Endothelial cell of umbilical vein (primary cell): ENCODE measurements at regions of chr1 and their contacts with region 1.

Region 1: DNA sequence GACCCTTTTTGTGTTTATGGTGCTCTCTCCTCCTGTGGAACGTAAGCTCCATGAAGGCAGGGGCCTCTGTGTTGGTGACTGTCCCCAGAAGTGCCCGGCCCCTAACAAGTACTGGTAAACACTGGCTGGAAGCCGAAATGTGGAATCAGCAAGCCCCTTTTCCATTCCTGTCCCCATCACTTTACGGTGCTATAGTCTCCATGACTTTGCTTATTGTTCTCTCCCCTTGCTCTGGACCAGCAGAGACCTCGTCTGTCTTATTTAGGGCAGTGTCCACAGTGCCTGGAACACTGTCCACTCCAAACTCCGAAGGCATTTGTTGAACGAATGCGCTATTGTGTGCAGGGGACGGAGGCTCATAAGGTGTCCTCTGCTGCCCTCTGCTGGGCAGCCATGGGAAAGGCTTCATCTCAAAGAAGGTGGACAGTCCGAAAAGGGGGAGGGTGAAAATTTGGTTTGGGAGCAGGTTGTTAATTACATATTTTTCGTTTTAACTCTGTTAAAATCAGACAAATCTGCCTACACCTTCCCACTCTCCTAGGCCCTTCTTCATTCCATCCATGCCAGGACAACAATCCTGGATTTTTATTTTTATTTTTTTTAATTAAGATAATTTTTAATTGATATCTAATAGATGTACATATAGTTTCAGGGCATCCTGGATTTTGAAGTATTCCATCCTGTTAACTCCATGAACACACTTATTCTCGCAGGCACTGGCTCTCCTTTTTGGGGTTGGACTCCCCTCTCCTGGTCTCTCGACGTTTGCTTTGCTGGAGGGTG is 115.6 kb downstream of the PGBD5 start:
- DNase-seq: peak; percentile 68
- H3K4me3 ChIP-seq: no peak overlapping the region
- H3K27ac ChIP-seq: no peak overlapping the region
- H3K4me1 ChIP-seq: peaks cover 8% of the 10 kb centered on the region
- H3K27me3 ChIP-seq: no peaks in the 10 kb centered on the region
- CTCF ChIP-seq: peak; percentile 80 to 87
- POLR2A ChIP-seq: no peak

Region 2: DNA sequence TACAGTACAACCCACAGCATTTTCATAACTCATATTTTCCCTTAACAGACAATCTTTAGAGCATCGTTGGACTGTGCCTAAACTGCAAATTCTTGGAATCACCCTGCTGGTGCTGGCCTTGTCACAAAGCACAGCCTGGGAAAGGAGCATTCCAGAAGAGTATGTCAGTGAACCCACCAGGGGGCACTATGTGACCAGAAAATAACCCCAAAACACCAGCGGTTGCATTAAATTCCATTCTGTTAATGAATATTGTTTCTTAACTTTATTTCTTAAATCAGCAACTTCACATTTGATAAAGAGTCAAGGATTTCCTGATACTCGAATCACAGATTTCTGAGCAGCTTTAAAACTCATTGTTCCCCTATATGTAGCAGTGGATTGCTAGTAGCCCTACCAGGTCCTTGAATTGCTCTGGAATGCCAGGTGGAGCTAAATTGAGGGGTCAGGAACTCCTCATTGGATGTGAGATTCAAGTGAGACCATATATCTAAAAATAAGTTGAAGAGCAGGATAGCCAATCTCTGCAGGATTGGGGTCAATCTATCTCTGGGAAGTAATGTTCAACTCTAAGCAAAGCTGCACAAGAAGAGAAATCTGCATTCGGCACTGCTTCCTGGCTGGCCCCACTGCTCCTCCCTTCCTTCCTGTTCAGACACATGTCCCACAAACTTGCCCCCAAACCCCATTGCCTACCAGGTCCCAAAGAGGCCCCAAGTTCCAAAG is 1052.4 kb before region 1 on chr1:
- CTCF ChIA-PET with region 1: interaction called, 3 read pairs
- POLR2A ChIA-PET with region 1: no interaction called
- dilution Hi-C with region 1: no loop called
- intact Hi-C with region 1: loop called (anchors 1 kb)
- DNase-seq: peak; percentile 71
- H3K4me3 ChIP-seq: no peak overlapping the region
- H3K27ac ChIP-seq: no peak overlapping the region
- H3K4me1 ChIP-seq: peaks cover 5% of the 10 kb centered on the region
- H3K27me3 ChIP-seq: no peaks in the 10 kb centered on the region
- CTCF ChIP-seq: peak; percentile 68 to 80
- POLR2A ChIP-seq: no peak

Region 3: DNA sequence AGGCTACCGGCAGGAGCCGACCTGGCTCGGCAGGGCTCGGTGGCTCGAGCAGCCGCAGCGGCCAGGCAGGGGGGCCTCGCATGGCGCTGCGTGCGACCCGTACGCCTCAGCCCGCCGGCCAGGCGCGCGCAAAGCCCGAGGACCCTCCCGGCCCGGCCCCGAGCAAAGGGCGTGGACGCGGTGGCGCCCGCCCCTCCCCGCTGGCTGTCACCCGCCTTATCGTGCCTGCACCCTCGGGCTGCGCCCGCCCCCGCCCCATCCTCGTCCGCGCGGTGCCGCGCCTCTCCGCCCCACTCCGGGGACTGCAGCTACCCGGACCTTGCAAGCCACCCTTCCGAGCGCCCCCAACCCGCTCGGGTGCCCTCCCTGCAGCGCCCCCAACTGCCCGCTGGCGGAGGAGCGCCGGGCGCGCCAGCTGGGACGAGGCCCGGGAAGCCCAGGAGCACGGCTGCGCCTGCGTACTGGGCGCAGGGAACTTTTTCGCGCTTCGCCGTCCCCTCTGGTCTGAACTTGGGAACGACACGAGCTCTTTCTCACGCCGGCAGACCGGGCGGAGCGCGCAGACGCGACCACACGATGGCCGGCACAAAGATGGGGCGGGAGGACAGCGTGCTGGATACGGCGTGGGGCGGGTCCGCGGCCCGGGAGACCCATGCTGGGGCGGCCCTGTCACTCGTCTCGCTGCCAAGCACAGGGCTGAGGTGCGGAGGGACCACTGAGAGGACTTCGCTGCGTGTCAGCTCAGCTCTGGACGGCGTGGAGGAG is 751.8 kb before region 1 on chr1 and contains the start of gene ABCB10:
- CTCF ChIA-PET with region 1: interaction called, 5 read pairs
- POLR2A ChIA-PET with region 1: interaction called, 3 read pairs
- dilution Hi-C with region 1: no loop called
- intact Hi-C with region 1: loop called (anchors 1 kb)
- DNase-seq: peak; percentile 99
- H3K4me3 ChIP-seq: peak within 1 kb of the TSS; percentile 83 to 84 (median 84)
- H3K27ac ChIP-seq: peak within 1 kb of the TSS; percentile 6
- H3K4me1 ChIP-seq: peaks cover 15% of the 10 kb centered on the region
- H3K27me3 ChIP-seq: no peaks in the 10 kb centered on the region
- CTCF ChIP-seq: peak; percentile 86 to 97
- POLR2A ChIP-seq: no peak
- total RNA-seq, gene ABCB10: 19.4 and 19.8 TPM in 2 replicates

Region 4: DNA sequence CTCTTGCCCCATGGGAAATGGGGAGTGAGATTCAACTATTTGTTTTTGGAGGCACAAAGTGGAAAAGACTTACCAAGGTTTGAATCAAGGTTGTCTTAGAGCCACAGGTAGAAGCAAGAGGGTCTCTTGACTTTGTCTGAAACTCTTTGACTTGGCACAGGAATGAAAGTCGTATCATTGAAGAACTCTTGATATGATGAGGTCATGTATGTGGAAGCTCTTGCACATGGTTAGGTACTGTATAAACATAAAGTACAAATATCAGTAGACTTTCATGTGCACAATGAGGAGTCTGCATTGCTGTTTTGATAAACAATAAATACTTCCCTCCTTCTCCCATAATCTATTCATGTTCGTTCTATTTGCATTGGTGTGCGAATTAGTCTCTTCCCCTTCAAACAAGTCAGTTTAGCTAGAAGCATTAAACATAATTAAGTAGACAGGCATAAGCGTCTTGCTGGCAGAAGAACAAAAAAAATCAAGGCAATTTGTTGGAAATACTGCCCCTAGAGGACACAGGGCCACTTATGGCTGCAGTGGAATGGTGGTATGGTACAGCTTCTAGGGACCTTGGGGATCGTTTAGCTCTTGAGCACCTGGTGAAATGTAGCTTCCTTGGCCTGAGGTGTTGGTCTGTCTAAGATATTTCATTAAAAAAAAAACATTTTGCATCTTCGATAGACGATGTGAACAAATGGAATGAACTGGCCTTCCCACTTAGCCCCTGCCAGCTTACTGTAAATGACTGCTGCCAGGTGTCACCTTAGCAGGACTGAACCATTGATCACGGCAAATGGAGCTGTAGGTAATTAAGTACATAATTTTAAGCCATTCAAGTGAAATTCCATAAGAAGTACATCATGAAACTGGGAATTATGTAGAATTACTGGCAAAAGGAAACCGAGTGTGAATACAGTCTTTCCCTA is 461.6 kb before region 1 on chr1:
- CTCF ChIA-PET with region 1: no interaction called
- POLR2A ChIA-PET with region 1: no interaction called
- dilution Hi-C with region 1: no loop called
- intact Hi-C with region 1: loop called (anchors 10 kb)
- DNase-seq: peak; percentile 36
- H3K4me3 ChIP-seq: no peak overlapping the region
- H3K27ac ChIP-seq: no peak overlapping the region
- H3K4me1 ChIP-seq: no peaks in the 10 kb centered on the region
- H3K27me3 ChIP-seq: no peaks in the 10 kb centered on the region
- CTCF ChIP-seq: peak; percentile 41 to 49
- POLR2A ChIP-seq: no peak

Region 5: DNA sequence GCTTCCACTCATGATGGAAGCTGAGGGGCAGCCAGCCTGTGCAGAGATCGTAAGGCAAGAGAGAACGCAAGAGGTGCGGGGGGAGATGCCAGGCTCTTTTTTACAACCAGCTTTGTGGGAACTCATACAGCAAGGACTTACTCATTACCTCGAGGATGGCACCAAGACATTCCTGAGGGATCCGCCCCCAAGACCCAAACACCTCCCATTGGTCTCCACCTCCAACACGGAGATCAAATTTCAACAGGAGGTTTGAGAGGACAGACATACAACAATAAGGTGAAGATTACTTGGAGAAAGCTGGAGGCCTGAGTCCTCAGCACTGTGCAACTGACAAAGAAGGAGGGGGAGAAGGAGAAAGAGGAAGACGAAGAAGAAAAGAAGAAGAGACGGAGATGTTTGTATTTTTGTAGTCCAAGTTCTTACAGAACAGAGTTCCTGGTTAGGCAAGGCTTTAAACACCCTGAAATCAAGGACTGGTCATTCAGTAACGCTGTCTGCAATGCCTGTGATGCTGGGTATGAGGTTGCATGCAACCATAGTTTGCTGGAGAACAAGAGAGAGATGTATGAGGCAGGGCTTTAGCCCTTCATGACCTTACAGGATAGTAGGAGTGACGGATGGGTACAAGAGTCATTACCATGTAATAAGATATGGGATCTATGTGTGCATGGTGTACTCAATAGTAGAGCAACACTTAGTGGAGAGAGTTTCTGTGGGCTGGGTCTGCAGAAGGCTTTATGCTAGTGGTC is 263.3 kb before region 1 on chr1:
- CTCF ChIA-PET with region 1: no interaction called
- POLR2A ChIA-PET with region 1: no interaction called
- dilution Hi-C with region 1: no loop called
- intact Hi-C with region 1: no loop called
- DNase-seq: no peak
- H3K4me3 ChIP-seq: no peak overlapping the region
- H3K27ac ChIP-seq: no peak overlapping the region
- H3K4me1 ChIP-seq: no peaks in the 10 kb centered on the region
- H3K27me3 ChIP-seq: peaks cover 8 to 12% of the 10 kb centered on the region in 2 experiments
- CTCF ChIP-seq: no peak
- POLR2A ChIP-seq: no peak

Region 6: GRCh38 chr1:230104395-230105244 is 206.0 kb before region 1 on chr1:
- CTCF ChIA-PET with region 1: no interaction called
- POLR2A ChIA-PET with region 1: no interaction called
- dilution Hi-C with region 1: no loop called
- intact Hi-C with region 1: loop called (anchors 1 kb)
- DNase-seq: peak; percentile 96
- H3K4me3 ChIP-seq: peak overlapping the region in 1 of 3 experiments; percentile 3
- H3K27ac ChIP-seq: peak overlapping the region; percentile 76
- H3K4me1 ChIP-seq: peaks cover 25% of the 10 kb centered on the region
- H3K27me3 ChIP-seq: no peaks in the 10 kb centered on the region
- CTCF ChIP-seq: peak in 1 of 2 donors; percentile 18
- POLR2A ChIP-seq: peak; percentile 19

Region 7: DNA sequence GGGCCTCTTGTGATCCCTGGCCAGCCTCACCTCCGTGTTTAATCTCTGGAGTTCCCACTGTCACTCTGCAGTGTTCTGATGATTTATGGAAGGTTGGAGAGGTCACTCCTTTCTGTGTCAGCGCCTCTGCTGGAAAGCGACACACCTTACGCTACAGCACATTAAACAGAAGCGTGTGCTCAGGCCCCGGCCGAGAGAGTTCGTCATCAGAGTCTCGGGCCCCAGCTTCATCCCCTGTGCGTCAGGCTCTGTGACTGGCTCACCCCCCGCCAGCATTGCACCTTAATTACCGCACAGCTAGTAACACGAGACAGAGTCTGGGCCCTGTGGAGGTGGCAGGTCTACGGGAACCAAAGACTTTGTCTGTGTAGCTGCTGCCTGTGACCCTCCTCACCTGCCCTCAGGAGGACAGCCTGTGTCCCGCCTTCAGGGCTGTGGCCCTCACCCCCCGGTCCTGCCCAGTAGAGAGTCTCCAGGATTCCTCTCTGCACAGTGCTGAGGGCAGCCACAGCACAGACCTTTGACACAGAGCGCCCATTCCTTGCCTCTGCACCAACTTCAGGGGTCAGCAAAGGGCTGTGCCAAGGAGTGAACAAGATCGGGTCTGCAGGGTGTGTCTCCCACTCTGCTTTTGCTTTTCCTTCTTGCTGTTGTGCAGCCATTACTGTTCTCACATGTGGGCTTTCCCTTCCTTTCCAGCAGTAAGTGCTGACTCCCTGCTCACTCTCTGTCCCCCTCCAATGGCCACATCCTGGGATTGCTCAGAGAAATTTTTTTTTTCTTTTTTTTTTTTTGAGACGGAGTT is 42.0 kb before region 1 on chr1:
- CTCF ChIA-PET with region 1: interaction called, 3 read pairs
- POLR2A ChIA-PET with region 1: no interaction called
- dilution Hi-C with region 1: no loop called
- intact Hi-C with region 1: loop called (anchors 1 kb)
- DNase-seq: peak; percentile 64
- H3K4me3 ChIP-seq: no peak overlapping the region
- H3K27ac ChIP-seq: no peak overlapping the region
- H3K4me1 ChIP-seq: peaks cover 16% of the 10 kb centered on the region
- H3K27me3 ChIP-seq: no peaks in the 10 kb centered on the region
- CTCF ChIP-seq: peak; percentile 51 to 68
- POLR2A ChIP-seq: no peak

Region 8: DNA sequence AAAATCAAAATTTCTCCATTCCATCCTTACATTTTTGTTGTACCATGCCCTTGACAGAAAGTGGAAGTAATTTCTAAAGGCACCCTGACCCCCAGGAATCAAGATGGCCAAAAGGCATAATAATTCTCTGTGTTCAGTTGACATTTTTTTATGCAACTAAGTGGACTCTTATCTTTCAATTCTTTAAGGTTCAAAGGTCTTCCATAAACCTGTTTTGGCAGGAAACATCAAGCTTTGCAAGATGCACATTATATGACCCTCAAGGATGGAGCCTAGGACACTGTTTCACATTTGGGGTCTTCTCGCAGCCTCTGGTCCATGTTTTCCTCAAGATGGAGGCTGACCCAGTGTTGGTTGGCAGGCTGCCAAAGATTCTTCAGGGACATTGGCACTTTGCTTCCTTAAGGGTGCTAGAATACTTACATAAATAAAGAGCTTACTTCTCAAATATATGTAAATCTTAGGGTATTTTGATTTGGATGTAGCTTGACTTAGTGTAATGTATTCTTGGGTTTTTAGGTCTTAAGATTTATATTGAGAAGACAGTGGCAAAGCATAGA is 283.7 kb after region 1 on chr1:
- CTCF ChIA-PET with region 1: no interaction called
- POLR2A ChIA-PET with region 1: no interaction called
- dilution Hi-C with region 1: no loop called
- intact Hi-C with region 1: no loop called
- DNase-seq: no peak
- H3K4me3 ChIP-seq: no peak overlapping the region
- H3K27ac ChIP-seq: no peak overlapping the region
- H3K4me1 ChIP-seq: no peaks in the 10 kb centered on the region
- H3K27me3 ChIP-seq: no peaks in the 10 kb centered on the region
- CTCF ChIP-seq: no peak
- POLR2A ChIP-seq: no peak